ENCODE measurements at regions of chr18 and their contacts with region 1.

Region 1: GRCh38 chr18:35005963-35006577 is 35.1 kb upstream of the MAPRE2 start:
- DNase-seq: no peak
- H3K4me3 ChIP-seq: no peak overlapping the region
- H3K27ac ChIP-seq: no peak overlapping the region
- H3K4me1 ChIP-seq: no peaks in the 10 kb centered on the region
- H3K27me3 ChIP-seq: no peaks in the 10 kb centered on the region
- CTCF ChIP-seq: peak; percentile 31 to 85 (median 60)
- POLR2A ChIP-seq: no peak

Region 2: DNA sequence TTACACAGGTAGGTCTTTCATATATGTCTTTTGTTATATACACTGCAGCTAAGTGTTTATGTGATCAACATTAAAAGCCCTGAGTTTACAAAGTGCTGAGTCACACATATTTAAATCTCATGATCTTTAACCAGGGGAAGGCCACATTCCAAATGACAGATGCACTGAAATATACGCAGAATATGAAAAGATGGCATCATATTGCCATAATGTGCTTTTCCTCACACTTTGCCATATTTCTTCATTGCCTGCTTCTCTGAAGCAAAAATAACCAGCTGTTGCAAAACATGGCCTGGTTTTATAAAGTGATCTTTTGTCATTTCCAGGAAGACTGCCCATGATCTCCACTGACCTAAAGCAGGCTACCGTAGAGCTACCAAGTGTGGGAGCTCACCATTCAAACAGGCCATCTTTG is 58.4 kb before region 1 on chr18:
- intact Hi-C with region 1: no loop called
- DNase-seq: no peak
- H3K4me3 ChIP-seq: no peak overlapping the region
- H3K27ac ChIP-seq: no peak overlapping the region
- H3K4me1 ChIP-seq: no peaks in the 10 kb centered on the region
- H3K27me3 ChIP-seq: no peaks in the 10 kb centered on the region
- CTCF ChIP-seq: no peak
- POLR2A ChIP-seq: no peak

Region 3: GRCh38 chr18:35060122-35060815 is 54.2 kb after region 1 on chr18:
- intact Hi-C with region 1: no loop called
- DNase-seq: no peak
- H3K4me3 ChIP-seq: no peak overlapping the region
- H3K27ac ChIP-seq: no peak overlapping the region
- H3K4me1 ChIP-seq: peaks cover 16 to 20% of the 10 kb centered on the region in 2 donors
- H3K27me3 ChIP-seq: no peaks in the 10 kb centered on the region
- CTCF ChIP-seq: no peak
- POLR2A ChIP-seq: no peak

Region 4: DNA sequence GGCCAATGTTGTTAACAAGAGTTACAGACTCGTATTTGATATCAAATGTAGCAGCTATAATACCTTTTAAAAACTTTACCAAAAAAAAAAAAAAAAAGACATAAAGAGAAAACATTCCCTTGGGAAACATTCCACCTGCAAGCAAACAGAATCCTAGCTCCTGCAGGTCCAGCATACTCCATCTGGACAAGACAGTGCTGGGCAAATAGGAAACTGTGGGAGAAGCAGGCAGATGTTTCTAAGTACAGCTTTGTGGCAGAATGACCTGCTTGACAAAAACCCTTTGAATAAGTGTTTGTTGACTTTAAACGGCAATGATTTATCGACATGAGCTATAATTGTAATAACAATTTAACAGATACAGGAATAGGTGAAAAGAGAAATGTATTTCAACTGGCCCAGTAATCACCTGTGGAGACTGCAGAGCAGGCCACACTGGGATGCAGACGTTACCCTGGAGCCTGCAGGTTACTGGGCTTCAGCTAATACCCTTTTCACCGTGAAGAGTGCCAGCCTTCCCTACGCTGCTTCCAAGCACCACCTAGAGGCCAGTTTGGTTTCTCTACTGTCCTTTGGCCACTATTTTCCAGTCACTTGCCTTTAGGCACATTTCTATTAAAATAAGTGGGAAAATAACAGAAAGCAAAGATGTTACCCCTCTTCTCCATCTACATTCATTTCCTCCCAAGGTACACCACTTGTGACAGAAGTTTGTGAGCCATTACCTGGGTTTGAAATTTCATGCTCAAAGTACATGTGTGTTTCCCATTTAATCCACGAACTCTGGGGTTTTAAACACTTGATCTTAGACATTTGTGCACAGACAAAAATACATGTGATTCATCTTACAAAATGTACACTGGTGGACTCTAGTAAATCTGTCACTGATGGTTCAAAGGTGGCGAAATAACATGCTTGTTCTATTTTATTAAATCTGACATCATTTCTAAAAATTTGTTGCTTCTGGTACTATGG is 137.8 kb after region 1 on chr18:
- intact Hi-C with region 1: loop called (anchors 5 kb)
- DNase-seq: peak; percentile 58 to 66
- H3K4me3 ChIP-seq: no peak overlapping the region
- H3K27ac ChIP-seq: no peak overlapping the region
- H3K4me1 ChIP-seq: peaks cover 0 to 3% of the 10 kb centered on the region in 2 donors
- H3K27me3 ChIP-seq: no peaks in the 10 kb centered on the region
- CTCF ChIP-seq: peak in 5 of 6 experiments; percentile 47 to 90 (median 81)
- POLR2A ChIP-seq: no peak